Ascending aorta (tissue), 2 donors: ENCODE measurements at regions of chr10 and their contacts with region 1.

Region 1: GRCh38 chr10:61992671-61993668 is 91.5 kb downstream of the ARID5B start:
- DNase-seq: peak; percentile 48 to 88
- H3K4me3 ChIP-seq: peak overlapping the region; percentile 34 to 40
- H3K27ac ChIP-seq: peak overlapping the region; percentile 73 to 87
- H3K4me1 ChIP-seq: peaks cover 3 to 54% of the 10 kb centered on the region in 2 donors
- H3K27me3 ChIP-seq: no peaks in the 10 kb centered on the region
- CTCF ChIP-seq: no peak

Region 2: DNA sequence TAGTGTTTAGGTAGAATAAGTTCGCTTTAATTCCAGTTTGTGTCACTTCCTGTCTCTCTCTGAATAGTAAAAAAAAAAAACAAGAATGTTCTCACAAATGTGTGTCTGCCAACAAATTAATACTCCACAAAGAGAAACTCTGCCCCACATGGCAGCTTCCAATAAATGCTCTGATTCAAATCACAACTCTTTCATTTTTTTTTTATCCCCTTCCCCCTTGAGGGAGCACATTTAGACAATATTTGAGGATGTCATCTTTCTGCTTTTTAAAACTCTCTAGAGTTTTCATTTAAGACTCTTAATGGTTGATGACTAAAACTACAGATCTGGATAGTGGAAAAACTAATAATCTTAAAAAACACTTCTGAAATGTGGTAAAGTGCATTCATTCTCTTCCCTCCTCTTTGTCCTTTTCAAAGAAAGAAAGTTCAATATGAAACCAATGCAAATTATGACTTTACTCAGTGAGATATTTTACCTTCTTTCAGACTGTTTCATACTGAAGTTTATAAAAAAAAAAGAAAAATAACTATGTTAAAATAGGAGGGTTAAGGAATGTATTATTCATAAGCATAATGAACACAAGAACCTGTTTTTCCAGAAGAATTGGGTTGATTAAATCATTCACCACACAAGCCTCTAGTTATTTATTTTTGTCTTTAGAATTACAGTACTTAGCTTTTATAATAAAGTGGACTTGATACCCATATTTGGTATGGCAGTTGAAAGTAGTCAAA is 49.1 kb before region 1 on chr10:
- intact Hi-C with region 1: loop called (anchors 2 kb)
- DNase-seq: no peak
- H3K4me3 ChIP-seq: peak overlapping the region in 1 of 2 donors; percentile 32
- H3K27ac ChIP-seq: peak overlapping the region; percentile 79
- H3K4me1 ChIP-seq: peaks cover 6 to 49% of the 10 kb centered on the region in 2 donors
- H3K27me3 ChIP-seq: no peaks in the 10 kb centered on the region
- CTCF ChIP-seq: peak in 2 of 3 experiments; percentile 21 to 22

Region 3: GRCh38 chr10:62005281-62005680 is 12.3 kb after region 1 on chr10:
- intact Hi-C with region 1: loop called (anchors 1 kb)
- DNase-seq: no peak
- H3K4me3 ChIP-seq: no peak overlapping the region
- H3K27ac ChIP-seq: peak overlapping the region; percentile 75 to 77
- H3K4me1 ChIP-seq: peaks cover 7 to 58% of the 10 kb centered on the region in 2 donors
- H3K27me3 ChIP-seq: no peaks in the 10 kb centered on the region
- CTCF ChIP-seq: no peak

Region 4: DNA sequence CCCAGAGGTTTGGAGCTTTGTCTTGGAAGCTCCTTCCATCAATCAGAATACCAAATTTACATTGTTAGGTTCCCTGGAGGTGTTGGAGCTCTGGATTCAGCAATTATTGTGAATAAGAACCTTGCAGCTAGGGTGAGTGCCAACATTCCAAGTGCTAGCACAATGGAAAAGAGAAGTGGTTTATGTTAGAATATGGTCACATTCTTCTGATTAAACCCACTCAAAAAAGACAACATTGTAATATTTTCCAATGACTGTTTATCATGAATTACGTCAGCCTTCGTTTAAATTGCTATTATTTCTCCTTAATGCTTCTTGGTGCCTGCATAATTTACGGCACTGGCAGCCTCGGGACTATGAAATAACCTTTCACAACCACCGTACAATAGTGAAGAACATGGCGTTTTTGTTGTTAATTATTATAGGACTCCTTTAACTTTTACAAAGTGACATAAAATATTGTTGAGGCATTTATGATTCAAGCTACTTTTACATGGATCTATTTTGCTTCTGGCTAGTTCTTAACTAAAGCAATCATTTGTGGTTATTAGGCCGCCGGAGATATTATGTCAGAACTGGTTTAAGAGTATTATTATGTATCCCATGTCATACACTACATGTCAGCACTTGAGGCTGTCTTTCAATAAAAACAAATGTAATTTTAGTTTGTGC is 26.2 kb after region 1 on chr10:
- intact Hi-C with region 1: loop called (anchors 2 kb)
- DNase-seq: no peak
- H3K4me3 ChIP-seq: peak overlapping the region; percentile 12 to 33
- H3K27ac ChIP-seq: peak overlapping the region; percentile 88 to 91
- H3K4me1 ChIP-seq: peaks cover 16 to 42% of the 10 kb centered on the region in 2 donors
- H3K27me3 ChIP-seq: no peaks in the 10 kb centered on the region
- CTCF ChIP-seq: no peak